ENCODE measurements at regions of chr5 and their contacts with region 1.

Region 1: DNA sequence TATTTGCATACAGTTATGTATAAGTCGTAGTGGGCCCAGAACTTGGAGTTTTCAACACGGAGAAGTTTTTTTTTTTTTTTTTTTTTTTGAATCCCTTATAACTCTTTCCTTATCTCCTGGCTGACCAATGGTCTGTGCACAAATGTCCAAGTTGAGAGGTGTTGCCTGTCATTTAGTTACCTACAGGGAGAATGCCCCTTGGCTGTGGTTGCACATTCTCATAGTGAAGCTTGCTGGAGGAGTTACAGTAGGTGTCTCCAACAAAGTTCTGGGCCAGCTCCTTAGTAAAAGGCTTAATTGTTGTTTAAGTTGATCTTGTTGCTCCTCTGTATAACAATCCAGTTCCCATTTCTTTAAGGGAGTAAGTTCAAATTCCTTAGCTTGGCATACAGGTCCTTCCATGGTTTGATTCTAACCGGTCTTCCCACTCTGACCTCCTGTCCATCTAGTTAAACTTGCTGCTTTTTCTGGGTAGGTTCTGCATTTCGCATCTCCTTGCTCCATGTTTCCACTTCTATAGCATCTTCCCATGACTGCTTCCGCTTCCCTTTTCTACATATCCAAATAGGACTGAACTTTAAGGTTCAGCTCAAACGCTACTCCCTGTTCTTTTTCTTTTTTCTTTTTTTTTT is 95.4 kb downstream of the ARHGAP26 start:
- DNase-seq: no peak
- H3K4me3 ChIP-seq: no peak overlapping the region
- H3K27ac ChIP-seq: no peak overlapping the region
- H3K4me1 ChIP-seq: peaks cover 31% of the 10 kb centered on the region
- H3K27me3 ChIP-seq: no peaks in the 10 kb centered on the region
- CTCF ChIP-seq: no peak

Region 2: GRCh38 chr5:141524604-141525597 is 1340.6 kb before region 1 on chr5:
- CTCF ChIA-PET with region 1: no interaction called
- POLR2A ChIA-PET with region 1: no interaction called
- intact Hi-C with region 1: no loop called
- DNase-seq: peak; percentile 77 to 78
- H3K4me3 ChIP-seq: no peak overlapping the region
- H3K27ac ChIP-seq: no peak overlapping the region
- H3K4me1 ChIP-seq: peaks cover 38% of the 10 kb centered on the region
- H3K27me3 ChIP-seq: no peaks in the 10 kb centered on the region
- CTCF ChIP-seq: peak; percentile 97

Region 3: DNA sequence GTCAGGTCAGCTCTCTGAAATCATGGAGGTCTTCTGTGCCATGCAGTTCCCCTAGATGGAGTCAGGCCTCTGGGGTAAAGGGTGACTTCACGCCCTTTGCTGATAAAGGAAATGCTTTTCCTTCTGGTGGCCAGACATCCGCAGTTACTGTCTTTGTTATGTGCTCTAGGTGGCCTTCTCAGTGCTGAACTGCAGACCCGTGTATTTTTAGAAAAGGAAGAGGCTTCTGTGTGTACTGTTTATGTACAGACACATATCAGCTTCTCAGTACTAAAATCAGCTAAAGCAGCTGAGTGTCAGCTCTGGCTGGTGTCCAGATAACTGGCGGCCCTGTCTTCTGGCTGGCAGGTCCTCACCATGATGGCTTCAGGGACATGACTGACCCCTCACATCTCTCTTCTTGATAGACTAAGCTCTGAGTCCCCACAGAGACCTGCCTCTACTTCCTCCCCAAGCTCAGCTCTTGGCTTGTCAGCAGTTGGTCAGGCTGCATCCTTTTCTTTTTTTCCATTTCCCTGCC is 20.1 kb before region 1 on chr5:
- CTCF ChIA-PET with region 1: interaction called, 6 read pairs
- POLR2A ChIA-PET with region 1: interaction called, 3 read pairs
- intact Hi-C with region 1: loop called (anchors 2 kb)
- DNase-seq: no peak
- H3K4me3 ChIP-seq: no peak overlapping the region
- H3K27ac ChIP-seq: peak overlapping the region; percentile 90
- H3K4me1 ChIP-seq: peaks cover 32% of the 10 kb centered on the region
- H3K27me3 ChIP-seq: no peaks in the 10 kb centered on the region
- CTCF ChIP-seq: no peak

Measured in PC-9 (cell line).